ENCODE measurements at regions of chr11 and their contacts with region 1.

Region 1: GRCh38 chr11:117426269-117426685 is 98.6 kb downstream of the CEP164 start:
- DNase-seq: peak; percentile 69 to 78
- H3K4me3 ChIP-seq: no peak overlapping the region
- H3K27ac ChIP-seq: no peak overlapping the region
- H3K4me1 ChIP-seq: peaks cover 15 to 35% of the 10 kb centered on the region in 2 donors
- H3K27me3 ChIP-seq: no peaks in the 10 kb centered on the region
- CTCF ChIP-seq: peak; percentile 91 to 99 (median 94)
- POLR2A ChIP-seq: no peak

Region 2: GRCh38 chr11:117273550-117274289 is 152.6 kb before region 1 on chr11:
- intact Hi-C with region 1: no loop called
- DNase-seq: no peak
- H3K4me3 ChIP-seq: no peak overlapping the region
- H3K27ac ChIP-seq: no peak overlapping the region
- H3K4me1 ChIP-seq: no peaks in the 10 kb centered on the region
- H3K27me3 ChIP-seq: no peaks in the 10 kb centered on the region
- CTCF ChIP-seq: no peak
- POLR2A ChIP-seq: no peak

Region 3: GRCh38 chr11:117327567-117328374 is 98.5 kb before region 1 on chr11 and contains the start of gene CEP164:
- intact Hi-C with region 1: no loop called
- DNase-seq: peak; percentile 97
- H3K4me3 ChIP-seq: peak within 1 kb of the TSS; percentile 38 to 76 (median 55)
- H3K27ac ChIP-seq: peak within 1 kb of the TSS; percentile 75 to 88 (median 78)
- H3K4me1 ChIP-seq: peaks cover 9 to 13% of the 10 kb centered on the region in 2 donors
- H3K27me3 ChIP-seq: no peaks in the 10 kb centered on the region
- CTCF ChIP-seq: no peak
- POLR2A ChIP-seq: peak in 1 of 2 donors; percentile 65
- total RNA-seq, gene CEP164: 23.1 to 56.5 (median 29.0) TPM

Region 4: GRCh38 chr11:117479372-117479771 is 53.1 kb after region 1 on chr11:
- intact Hi-C with region 1: no loop called
- DNase-seq: no peak
- H3K4me3 ChIP-seq: no peak overlapping the region
- H3K27ac ChIP-seq: no peak overlapping the region
- H3K4me1 ChIP-seq: peaks cover 7 to 11% of the 10 kb centered on the region in 2 donors
- H3K27me3 ChIP-seq: no peaks in the 10 kb centered on the region
- CTCF ChIP-seq: no peak
- POLR2A ChIP-seq: no peak

Region 5: DNA sequence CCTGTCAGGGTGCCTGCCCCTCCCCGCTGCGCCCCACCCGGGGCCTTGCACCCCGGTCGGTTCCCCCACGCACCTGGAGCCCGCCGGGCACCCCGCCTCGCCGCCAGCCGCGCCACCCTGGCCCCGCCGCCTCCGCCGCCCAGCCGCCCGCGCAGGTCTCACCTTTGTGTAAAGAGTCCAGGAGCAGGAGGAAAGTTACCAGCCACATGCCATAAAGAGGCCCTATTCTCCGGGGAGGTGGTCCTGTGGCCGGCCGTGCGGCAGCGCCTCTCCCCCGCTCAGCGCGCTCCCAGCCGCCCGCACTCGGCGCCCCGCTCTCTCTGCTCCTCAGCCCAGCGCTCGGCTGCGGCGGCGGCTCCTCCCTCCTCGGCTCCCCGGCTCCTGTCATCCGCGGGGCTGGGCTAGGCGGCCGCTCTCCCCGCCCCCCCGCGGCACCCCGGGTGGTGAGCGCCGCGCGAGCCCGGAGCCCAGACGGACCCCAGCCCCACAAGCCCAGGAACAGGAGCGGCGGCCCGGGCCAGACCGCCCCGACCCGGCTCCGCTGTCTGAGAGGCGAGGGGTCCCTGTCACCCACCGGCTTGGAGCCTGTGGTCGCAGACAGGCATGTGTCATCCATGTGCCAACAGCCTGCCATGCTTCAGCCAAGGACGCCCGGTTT is 370.7 kb after region 1 on chr11 and contains the start of gene DSCAML1:
- intact Hi-C with region 1: loop called (anchors 5 kb)
- DNase-seq: peak; percentile 55 to 61
- H3K4me3 ChIP-seq: peak within 1 kb of the TSS in 2 of 3 donors; percentile 36 to 73
- H3K27ac ChIP-seq: no peak within 1 kb of the TSS
- H3K4me1 ChIP-seq: peaks cover 11 to 20% of the 10 kb centered on the region in 2 donors
- H3K27me3 ChIP-seq: peaks cover 9% of the 10 kb centered on the region
- CTCF ChIP-seq: no peak
- POLR2A ChIP-seq: no peak
- total RNA-seq, gene DSCAML1: 0.54 to 1.8 (median 0.99) TPM

Region 6: DNA sequence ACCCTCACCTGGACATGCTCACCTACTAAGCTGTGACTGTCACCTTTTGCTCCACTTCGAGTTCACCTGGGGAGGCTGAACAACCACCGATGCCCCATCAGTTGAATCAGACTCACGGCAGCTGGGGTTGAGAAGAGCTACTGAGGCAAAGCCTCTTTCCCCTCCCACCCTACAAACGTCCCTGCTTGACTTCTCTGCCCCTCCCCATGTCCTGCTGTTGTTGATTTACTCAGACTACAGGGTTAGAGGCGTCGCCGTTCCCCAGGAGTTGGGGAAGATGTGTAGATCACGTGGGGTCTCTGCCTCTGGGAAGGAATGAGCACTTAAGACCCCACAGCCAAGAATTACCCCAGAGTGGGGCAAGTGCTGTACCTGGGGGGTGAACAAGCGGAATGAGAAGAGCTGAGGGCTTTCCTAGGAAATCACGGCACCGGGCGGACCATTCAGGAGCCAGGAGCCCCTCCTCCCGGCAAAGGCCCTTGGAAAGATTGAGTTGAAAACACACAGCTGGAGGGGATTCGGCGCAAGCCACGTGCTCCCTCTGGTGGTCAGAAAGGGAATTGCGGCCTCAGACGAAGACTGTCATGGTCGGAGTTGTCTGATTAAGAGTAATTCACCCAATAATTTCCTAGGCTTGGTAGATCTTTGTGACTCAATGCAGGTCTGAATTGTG is 391.2 kb after region 1 on chr11:
- intact Hi-C with region 1: loop called (anchors 5 kb)
- DNase-seq: peak; percentile 87 to 88
- H3K4me3 ChIP-seq: peak overlapping the region in 1 of 3 donors; percentile 1
- H3K27ac ChIP-seq: peak overlapping the region; percentile 24 to 89 (median 79)
- H3K4me1 ChIP-seq: peaks cover 32 to 75% of the 10 kb centered on the region in 2 donors
- H3K27me3 ChIP-seq: no peaks in the 10 kb centered on the region
- CTCF ChIP-seq: peak; percentile 97 to 100 (median 99)
- POLR2A ChIP-seq: no peak

Measured in thyroid gland (tissue), 4 donors.